Activated CD8-positive, alpha-beta T cell treated with anti-CD3 and anti-CD28 coated beads, Interleukin-2, amount 10 ng/mL, durations not matched to agents 7 days and 5 days (primary cell): ENCODE measurements at regions of chr6 and their contacts with region 1.

Region 1: DNA sequence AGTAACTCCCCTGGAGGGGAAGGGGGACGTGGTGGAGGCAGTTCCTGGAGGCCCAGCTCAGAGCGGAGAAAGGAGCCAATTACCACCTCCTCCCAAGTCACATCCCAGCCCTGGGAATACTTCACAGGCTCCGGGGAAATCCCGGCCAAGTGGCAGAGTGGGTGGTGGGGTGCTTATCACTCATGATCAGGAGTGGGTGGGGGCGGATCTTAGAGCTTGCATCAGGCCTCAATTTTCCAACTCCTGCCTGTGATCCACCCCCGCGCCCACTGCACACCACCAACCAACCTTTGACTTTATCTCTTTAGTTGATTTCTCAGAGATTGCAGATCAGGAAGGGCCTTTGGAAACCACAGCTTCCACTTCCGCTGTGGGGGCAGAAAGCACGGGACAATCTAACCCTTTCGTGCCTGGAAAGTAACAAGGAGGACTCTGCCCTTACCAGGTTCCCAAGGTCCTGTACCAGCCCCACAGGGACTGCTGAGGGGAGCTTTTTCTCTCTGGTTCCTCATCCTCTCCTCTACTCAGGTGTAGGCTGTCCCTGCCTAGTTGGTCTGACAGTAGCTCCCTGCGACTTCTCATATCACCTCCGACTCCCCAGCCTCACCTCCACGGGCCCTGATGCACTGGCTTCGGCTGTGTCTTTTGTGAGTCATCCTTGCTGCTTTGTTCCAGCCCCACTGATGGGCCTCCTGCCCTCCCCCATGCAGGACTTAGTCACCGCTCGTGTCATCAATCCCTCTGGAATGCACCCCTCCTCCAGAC is 24.9 kb upstream of the IER3 start:
- DNase-seq: peak; percentile 86
- ATAC-seq: peak; percentile 84
- H3K4me3 Mint-ChIP-seq: peak overlapping the region; percentile 56
- H3K27ac Mint-ChIP-seq: peak overlapping the region; percentile 88
- H3K4me1 Mint-ChIP-seq: peaks cover 88% of the 10 kb centered on the region
- H3K27me3 Mint-ChIP-seq: no peaks in the 10 kb centered on the region

Region 2: DNA sequence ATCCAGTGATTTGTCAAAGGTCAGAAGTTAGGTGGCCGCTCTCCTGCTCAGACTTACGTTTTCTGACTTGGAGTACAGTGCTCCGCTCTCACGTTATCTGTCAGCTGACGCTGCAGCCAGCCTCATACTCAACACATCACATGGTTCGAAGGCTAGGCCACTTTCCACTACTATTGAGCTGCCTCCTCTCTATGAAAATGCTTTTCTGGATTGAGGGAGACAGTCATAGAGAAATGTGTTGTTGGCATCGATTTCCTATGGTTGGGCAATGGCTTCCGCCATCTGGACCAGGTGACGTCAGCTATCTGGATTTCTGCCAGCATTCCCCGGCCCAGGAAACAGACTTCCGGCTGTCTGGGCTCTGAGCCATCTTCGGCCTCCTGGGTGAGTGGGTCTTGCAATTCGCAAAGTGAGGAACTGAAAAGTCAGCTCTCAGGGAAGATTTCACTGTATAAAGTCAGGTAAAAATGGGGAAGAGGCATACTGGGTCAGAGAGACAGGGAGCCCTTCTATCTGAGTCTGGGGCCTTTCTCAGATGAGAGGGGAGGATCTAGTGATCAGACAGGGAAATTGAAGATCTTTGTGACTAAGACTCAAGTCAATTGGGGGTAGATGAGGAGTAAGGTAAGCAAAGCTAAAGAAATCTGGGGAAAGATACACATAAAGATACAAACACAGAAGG is 12.6 kb after region 1 on chr6:
- CTCF ChIA-PET with region 1: interaction called, 12 read pairs
- POLR2A ChIA-PET with region 1: interaction called, 46 read pairs
- DNase-seq: no peak
- ATAC-seq: no peak
- H3K4me3 Mint-ChIP-seq: no peak overlapping the region
- H3K27ac Mint-ChIP-seq: peak overlapping the region; percentile 48
- H3K4me1 Mint-ChIP-seq: peaks cover 76% of the 10 kb centered on the region
- H3K27me3 Mint-ChIP-seq: no peaks in the 10 kb centered on the region

Region 3: GRCh38 chr6:30787954-30788353 is 18.7 kb after region 1 on chr6:
- CTCF ChIA-PET with region 1: interaction called, 12 read pairs
- POLR2A ChIA-PET with region 1: interaction called, 46 read pairs
- DNase-seq: peak; percentile 77
- ATAC-seq: peak; percentile 83
- H3K4me3 Mint-ChIP-seq: peak overlapping the region; percentile 53
- H3K27ac Mint-ChIP-seq: peak overlapping the region; percentile 90
- H3K4me1 Mint-ChIP-seq: peaks cover 76% of the 10 kb centered on the region
- H3K27me3 Mint-ChIP-seq: no peaks in the 10 kb centered on the region

Region 4: DNA sequence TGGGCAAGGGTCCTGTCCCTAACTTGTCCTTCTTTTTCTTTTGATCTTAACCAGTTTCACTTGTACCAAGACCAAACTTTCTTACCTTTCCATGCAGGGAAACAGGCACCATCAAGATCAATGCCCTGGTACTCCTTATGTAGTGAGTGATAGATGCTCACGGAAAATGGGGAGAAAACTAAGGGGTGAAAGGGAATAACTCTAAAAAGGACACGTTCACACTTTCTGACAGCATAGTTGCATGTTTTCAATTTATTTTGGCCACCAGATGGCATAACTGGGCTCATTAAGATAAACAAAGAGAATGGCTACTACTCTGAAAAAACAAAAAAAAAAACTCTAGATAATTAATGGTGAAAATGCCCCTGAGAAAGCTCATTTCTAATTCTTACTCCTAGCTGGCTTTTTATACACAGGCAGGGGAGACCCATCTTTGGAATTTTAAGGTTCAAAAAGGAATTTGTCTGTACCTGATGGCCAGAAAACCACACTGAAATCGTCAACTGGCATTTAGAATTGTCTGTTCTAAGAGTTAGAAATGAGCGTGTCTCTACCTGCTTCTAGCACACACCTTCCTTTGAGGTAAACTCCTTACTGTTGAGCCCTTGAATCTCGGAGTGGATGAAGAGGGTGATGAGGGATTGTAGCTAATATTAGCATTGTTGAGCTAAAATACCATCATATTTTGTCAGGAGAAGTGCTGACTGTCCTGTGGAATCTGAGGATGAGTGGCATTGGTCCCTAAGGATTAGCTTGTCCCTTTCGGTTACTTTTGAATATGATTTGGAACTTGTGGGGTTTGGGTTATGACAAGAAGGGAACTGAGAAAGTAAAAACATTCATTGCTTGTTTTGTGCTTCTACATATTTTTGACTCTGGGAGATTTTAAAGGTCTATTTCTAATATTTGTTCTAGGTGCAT is 52.9 kb after region 1 on chr6:
- CTCF ChIA-PET with region 1: interaction called, 11 read pairs
- POLR2A ChIA-PET with region 1: interaction called, 5 read pairs
- DNase-seq: no peak
- ATAC-seq: no peak
- H3K4me3 Mint-ChIP-seq: no peak overlapping the region
- H3K27ac Mint-ChIP-seq: peak overlapping the region; percentile 39
- H3K4me1 Mint-ChIP-seq: peaks cover 60% of the 10 kb centered on the region
- H3K27me3 Mint-ChIP-seq: no peaks in the 10 kb centered on the region

Region 5: DNA sequence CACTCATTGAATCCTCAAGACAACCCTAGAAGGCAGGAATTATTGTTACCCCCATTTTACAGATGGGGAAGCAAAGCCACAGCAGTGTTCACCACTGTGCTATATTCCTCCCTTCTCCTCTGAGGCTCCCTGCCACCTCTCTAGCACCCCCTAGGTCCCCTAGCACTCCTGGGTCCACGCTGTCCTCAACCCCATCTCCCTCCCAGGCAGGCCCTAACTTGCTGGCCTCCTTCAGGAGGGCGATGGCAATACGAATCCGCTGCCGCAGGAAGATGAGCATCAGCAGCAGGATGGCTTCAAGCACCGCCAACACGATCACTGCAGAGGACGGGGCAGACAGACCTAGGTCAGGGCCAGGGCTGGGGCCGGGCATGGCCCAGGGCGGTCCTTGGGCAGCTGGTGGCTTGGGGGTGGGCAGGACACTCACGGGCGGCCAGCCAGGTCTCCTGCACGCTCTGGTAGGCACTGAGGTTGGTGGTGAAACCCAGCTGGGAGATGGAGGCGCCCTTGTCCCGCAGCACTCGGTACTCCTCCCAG is 1101.2 kb after region 1 on chr6:
- CTCF ChIA-PET with region 1: no interaction called
- POLR2A ChIA-PET with region 1: no interaction called
- DNase-seq: no peak
- ATAC-seq: peak; percentile 38
- H3K4me3 Mint-ChIP-seq: no peak overlapping the region
- H3K27ac Mint-ChIP-seq: no peak overlapping the region
- H3K4me1 Mint-ChIP-seq: peaks cover 8% of the 10 kb centered on the region
- H3K27me3 Mint-ChIP-seq: peaks cover 3% of the 10 kb centered on the region

Region 6: DNA sequence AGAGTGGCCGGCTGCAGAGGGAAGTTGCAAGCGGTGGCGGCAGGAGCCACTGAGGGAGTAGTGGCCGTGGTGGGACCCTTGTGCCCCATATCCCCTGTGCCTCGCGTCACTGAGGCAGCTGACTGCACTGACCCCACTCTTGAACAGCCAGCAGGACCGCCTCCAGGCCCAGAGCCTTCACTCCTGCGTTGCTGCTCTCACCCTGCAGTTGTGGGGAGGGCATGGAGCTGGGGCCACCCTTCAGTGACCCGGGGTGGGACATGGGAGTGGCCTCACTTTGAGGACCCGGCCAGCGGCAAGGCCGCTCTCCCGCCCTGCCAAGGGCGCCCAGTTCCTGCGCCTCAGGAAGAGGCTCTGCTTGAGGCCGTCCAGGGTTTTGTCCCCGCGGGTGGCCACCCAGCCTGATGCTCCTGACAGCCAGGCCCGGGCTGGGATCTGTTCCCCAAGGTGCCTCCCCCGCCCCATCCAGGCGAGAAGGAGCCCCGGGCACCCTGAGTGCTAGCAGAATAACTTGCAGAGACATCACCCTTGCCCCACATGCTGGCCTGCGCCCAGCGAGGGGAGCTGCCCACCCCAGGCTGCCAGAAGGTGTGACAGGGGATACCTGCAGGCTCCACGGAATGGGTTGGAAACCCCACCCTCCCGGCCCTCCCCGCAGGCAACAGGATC is 1714.8 kb after region 1 on chr6:
- CTCF ChIA-PET with region 1: no interaction called
- POLR2A ChIA-PET with region 1: no interaction called
- DNase-seq: no peak
- ATAC-seq: no peak
- H3K4me3 Mint-ChIP-seq: no peak overlapping the region
- H3K27ac Mint-ChIP-seq: no peak overlapping the region
- H3K4me1 Mint-ChIP-seq: no peaks in the 10 kb centered on the region
- H3K27me3 Mint-ChIP-seq: peaks cover 39% of the 10 kb centered on the region